ENCODE measurements at regions of chr12 and their contacts with region 1.

Region 1: DNA sequence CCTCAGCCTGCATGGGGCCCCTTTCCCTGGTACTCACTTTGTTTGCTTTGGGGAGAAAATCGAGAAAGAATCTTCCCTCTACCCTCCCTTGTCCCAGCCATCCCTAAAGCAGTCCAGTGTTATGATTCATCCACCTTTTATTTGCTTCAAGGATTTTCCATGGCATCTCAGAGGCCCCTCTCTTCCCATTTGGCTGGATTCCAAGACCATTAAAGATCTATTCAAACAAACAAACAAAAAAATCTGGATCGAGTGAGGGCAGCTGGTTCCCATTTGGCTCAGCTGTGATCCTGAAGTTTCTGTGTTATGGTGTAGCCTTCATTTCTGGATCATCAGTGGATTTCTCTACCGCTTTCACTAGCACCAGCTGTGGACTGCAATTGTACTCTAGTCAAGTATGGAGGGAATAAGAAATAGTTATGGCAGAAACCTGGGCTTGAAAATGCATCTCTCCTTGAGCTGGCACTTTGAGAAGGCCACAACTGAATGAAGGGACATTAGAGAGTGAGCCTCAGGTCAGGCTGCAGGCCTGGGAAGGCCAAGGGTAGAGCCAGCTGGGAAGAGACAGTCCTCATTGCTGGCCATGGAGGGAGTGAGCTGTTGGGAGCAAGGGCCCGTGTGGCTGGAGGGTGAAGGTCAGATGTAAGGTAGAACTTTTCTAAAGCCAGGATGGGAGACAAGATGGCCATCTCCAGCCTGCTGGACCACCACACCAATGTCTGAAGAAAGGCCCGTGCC is 13.7 kb downstream of the KRT71 start:
- DNase-seq: no peak
- H3K4me3 ChIP-seq: no peak overlapping the region
- H3K27ac ChIP-seq: no peak overlapping the region
- H3K4me1 ChIP-seq: no peaks in the 10 kb centered on the region
- H3K27me3 ChIP-seq: no peaks in the 10 kb centered on the region
- CTCF ChIP-seq: no peak
- EP300 ChIP-seq: no peak
- POLR2A ChIP-seq: no peak
- RAD21 ChIP-seq: no peak

Region 2: GRCh38 chr12:52423661-52424500 is 115.4 kb before region 1 on chr12:
- CTCF ChIA-PET with region 1: interaction called, 10 read pairs
- POLR2A ChIA-PET with region 1: no interaction called
- DNase-seq: no peak
- H3K4me3 ChIP-seq: no peak overlapping the region
- H3K27ac ChIP-seq: no peak overlapping the region
- H3K4me1 ChIP-seq: no peaks in the 10 kb centered on the region; a peak in 2 of 7 replicates
- H3K27me3 ChIP-seq: no peaks in the 10 kb centered on the region
- CTCF ChIP-seq: no peak
- EP300 ChIP-seq: no peak
- POLR2A ChIP-seq: no peak
- RAD21 ChIP-seq: no peak

Region 3: DNA sequence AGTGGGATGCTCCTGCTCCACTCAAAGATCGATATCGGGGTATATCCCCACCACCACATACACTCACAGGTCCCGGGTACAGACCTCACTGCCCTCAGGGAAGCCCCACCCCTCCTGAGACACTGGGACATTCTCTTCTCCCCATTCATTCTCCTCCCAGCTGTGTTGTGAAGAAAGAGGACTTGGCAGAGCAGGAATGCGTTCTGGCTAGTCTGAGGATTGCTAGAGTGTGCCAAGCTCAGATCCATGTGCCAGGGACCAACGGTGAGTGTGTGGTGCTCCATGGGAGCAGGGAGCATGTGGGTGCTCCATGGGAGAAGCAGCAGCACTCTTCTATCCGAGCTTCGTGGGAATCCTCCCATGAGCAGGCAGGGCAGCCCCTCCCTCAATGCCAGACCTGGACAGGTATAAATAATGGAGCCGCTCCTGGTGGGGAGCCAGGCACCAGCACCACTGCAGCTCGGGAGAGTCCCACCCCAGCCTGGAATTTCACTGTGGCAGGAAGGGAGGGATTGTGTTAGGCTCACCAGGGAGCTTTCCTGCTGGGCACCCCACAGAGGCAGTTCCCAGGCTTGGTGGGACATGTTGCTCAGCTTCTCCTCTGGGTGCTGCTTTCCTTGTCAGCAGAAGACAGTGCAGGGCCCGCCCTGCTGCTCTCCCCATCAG is 16.8 kb before region 1 on chr12:
- CTCF ChIA-PET with region 1: interaction called, 19 read pairs
- POLR2A ChIA-PET with region 1: no interaction called
- DNase-seq: peak in 1 of 2 experiments; percentile 27
- H3K4me3 ChIP-seq: no peak overlapping the region
- H3K27ac ChIP-seq: no peak overlapping the region
- H3K4me1 ChIP-seq: peaks cover 0 to 1% (median 0%) of the 10 kb centered on the region in 4 experiments; a peak in 1 of 7 replicates
- H3K27me3 ChIP-seq: no peaks in the 10 kb centered on the region; a peak in 1 of 7 replicates
- CTCF ChIP-seq: no peak
- EP300 ChIP-seq: no peak
- POLR2A ChIP-seq: no peak
- RAD21 ChIP-seq: no peak

Region 4: DNA sequence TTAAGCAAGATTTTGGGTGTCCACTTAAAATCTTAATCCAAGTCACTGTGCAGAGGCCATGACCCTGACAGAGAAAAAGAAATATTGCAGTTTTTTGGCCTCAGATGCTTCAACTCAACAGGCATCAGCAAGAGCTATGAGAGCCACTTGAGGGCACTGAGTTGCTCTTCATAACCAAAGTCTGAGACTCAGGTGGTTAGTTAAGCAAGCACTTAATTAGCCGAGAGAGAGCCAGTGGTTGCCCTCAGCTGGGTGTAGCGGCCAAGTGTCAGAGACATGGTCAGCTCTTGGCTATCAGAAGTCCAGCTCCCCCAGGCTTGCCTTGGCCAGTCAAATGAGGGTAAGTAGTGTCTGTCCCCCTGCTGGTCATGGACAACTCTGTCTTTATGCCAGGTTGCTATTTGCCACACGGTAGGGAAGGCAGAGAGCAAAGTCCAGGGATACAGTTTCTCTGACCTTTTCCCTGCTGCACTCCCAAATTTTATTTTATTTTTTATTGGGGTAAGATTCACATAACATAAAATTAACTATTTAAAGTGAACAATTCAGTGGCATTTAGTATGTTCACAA is 22.7 kb after region 1 on chr12:
- CTCF ChIA-PET with region 1: interaction called, 47 read pairs
- POLR2A ChIA-PET with region 1: no interaction called
- DNase-seq: no peak
- H3K4me3 ChIP-seq: no peak overlapping the region
- H3K27ac ChIP-seq: no peak overlapping the region
- H3K4me1 ChIP-seq: no peaks in the 10 kb centered on the region
- H3K27me3 ChIP-seq: no peaks in the 10 kb centered on the region
- CTCF ChIP-seq: peak; percentile 47 to 56 (median 56)
- EP300 ChIP-seq: no peak
- POLR2A ChIP-seq: no peak
- RAD21 ChIP-seq: peak; percentile 29 to 46; a peak in 3 of 4 replicates

Measured in H1 (cell line).